ENCODE measurements at regions of chr19 and their contacts with region 1.

Region 1: DNA sequence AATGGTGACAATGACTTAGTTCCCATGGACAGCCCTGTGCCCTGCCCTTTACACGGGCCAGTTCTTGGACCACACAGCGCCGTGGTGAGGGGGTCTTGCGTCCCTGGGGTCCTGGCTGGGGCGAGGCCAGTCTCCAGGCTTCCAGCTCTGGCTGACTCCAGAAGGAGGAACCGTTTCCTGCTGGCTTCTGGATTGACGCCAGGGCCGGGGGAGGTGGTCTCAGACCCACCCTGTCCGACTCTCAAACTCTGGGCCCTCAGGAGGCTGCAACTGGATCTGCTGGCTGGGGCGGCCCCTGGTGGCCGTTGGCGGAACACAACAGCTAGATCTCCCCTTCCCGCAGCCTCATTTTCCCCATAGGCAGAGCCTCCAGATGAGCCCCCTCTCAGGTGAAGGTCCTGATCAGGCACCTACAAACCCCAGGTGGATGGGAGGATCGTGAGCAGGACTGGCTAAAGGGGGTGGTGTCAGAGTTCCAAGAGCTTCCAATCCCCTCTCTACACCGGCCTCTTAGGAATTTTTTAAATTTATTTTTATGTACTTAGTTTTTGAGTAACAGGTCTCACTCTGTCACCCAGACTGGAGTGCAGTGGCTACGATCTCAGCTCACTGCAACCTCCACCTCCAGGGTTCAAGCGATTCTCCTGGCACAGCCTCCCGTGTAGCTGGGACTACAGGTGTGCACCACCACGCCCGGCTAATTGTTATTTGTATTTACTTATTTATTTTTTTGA is 8.0 kb downstream of the CCDC194 start:
- DNase-seq: peak; percentile 56
- H3K4me3 ChIP-seq: no peak overlapping the region
- H3K27ac ChIP-seq: no peak overlapping the region
- H3K4me1 ChIP-seq: peaks cover 26% of the 10 kb centered on the region
- H3K27me3 ChIP-seq: peaks cover 7% of the 10 kb centered on the region
- CTCF ChIP-seq: peak; percentile 94

Region 2: GRCh38 chr19:17292286-17293097 is 93.6 kb before region 1 on chr19:
- intact Hi-C with region 1: loop called (anchors 10 kb)
- DNase-seq: peak; percentile 66
- H3K4me3 ChIP-seq: peak overlapping the region; percentile 70
- H3K27ac ChIP-seq: peak overlapping the region; percentile 68
- H3K4me1 ChIP-seq: peaks cover 14% of the 10 kb centered on the region
- H3K27me3 ChIP-seq: no peaks in the 10 kb centered on the region
- CTCF ChIP-seq: peak; percentile 78

Region 3: GRCh38 chr19:17346109-17346671 is 39.9 kb before region 1 on chr19:
- intact Hi-C with region 1: loop called (anchors 2 kb)
- DNase-seq: peak; percentile 79
- H3K4me3 ChIP-seq: no peak overlapping the region
- H3K27ac ChIP-seq: peak overlapping the region; percentile 70
- H3K4me1 ChIP-seq: peaks cover 46% of the 10 kb centered on the region
- H3K27me3 ChIP-seq: peaks cover 15% of the 10 kb centered on the region
- CTCF ChIP-seq: peak; percentile 98